ENCODE measurements at regions of chr5 and their contacts with region 1.

Region 1: DNA sequence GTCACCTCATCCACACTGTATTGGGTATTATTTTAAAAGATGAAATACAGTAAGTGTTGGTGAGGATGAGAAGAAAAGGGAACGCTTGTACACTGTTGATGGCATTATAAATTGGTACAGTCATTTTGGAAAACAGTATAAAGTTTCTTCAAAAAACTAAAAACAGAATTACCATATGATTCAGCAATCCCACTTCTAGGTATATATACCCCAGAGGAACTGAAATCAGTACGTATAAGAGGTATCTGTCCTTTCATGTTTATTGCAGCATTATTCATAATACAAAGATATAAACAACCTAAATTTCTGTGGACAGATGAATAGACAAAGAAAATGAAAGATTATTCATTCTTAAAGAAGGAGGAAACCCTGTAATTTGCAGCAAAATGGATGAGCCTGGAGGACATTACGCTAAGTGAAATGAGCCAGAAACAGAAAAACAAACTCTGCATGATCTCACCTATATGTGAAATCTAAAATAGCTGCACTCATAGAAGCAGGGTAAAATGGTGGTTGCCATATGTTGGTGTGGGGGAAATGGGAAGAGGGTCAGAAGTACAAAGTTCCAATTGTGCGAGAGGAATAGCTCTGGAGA is 191.6 kb downstream of the TRIM36 start:
- DNase-seq: no peak
- ATAC-seq: no peak
- H3K4me3 ChIP-seq: no peak overlapping the region
- H3K4me3 Mint-ChIP-seq: no peak overlapping the region
- H3K27ac ChIP-seq: no peak overlapping the region
- H3K27ac Mint-ChIP-seq: no peak overlapping the region
- H3K4me1 ChIP-seq: no peaks in the 10 kb centered on the region
- H3K4me1 Mint-ChIP-seq: no peaks in the 10 kb centered on the region
- H3K27me3 ChIP-seq: no peaks in the 10 kb centered on the region
- H3K27me3 Mint-ChIP-seq: peaks cover 3 to 4% of the 10 kb centered on the region in 2 donors

Region 2: GRCh38 chr5:115109840-115110239 is 131.8 kb after region 1 on chr5:
- CTCF ChIA-PET with region 1: interaction called in 1 of 2 experiments, 11 read pairs
- POLR2A ChIA-PET with region 1: no interaction called
- DNase-seq: no peak
- ATAC-seq: no peak
- H3K4me3 ChIP-seq: no peak overlapping the region
- H3K4me3 Mint-ChIP-seq: no peak overlapping the region
- H3K27ac ChIP-seq: no peak overlapping the region
- H3K27ac Mint-ChIP-seq: no peak overlapping the region
- H3K4me1 ChIP-seq: no peaks in the 10 kb centered on the region
- H3K4me1 Mint-ChIP-seq: no peaks in the 10 kb centered on the region
- H3K27me3 ChIP-seq: peaks cover 0 to 8% of the 10 kb centered on the region in 2 experiments
- H3K27me3 Mint-ChIP-seq: peaks cover 29 to 47% of the 10 kb centered on the region in 2 donors

Region 3: GRCh38 chr5:115551415-115551814 is 573.3 kb after region 1 on chr5:
- CTCF ChIA-PET with region 1: no interaction called
- POLR2A ChIA-PET with region 1: no interaction called
- DNase-seq: no peak
- ATAC-seq: no peak
- H3K4me3 ChIP-seq: no peak overlapping the region
- H3K4me3 Mint-ChIP-seq: no peak overlapping the region
- H3K27ac ChIP-seq: no peak overlapping the region
- H3K27ac Mint-ChIP-seq: no peak overlapping the region
- H3K4me1 ChIP-seq: no peaks in the 10 kb centered on the region
- H3K4me1 Mint-ChIP-seq: peaks cover 0 to 2% (median 0%) of the 10 kb centered on the region in 3 donors
- H3K27me3 ChIP-seq: peaks cover 0 to 4% of the 10 kb centered on the region in 2 experiments
- H3K27me3 Mint-ChIP-seq: peaks cover 4 to 12% of the 10 kb centered on the region in 2 donors

Measured in T-cell (primary cell).